OCI-LY7 (cell line): ENCODE measurements at regions of chr7 and their contacts with region 1.

Region 1: DNA sequence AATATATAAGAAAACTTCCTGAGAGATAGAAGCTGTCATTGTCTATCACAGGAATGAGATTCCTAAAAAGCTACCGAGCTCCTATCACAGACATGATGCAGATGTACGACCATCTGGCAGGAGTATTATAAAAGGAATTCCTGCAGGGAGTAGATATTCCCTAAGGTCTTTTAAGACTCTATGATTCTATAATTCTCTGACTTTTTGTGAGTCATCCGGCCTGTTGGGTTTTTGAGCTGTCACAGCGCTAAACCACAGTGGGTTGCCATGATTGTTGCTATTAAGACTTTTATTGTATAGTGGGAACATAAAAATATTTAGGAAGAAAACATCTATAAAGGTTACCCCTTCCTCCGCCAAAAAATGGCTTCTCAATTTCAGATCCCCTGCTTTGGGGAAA is 223.4 kb downstream of the BMPER start:
- DNase-seq: no peak
- H3K4me3 ChIP-seq: no peak overlapping the region
- H3K27ac ChIP-seq: no peak overlapping the region
- H3K4me1 ChIP-seq: no peaks in the 10 kb centered on the region
- CTCF ChIP-seq: no peak

Region 2: GRCh38 chr7:34107276-34107675 is 21.5 kb before region 1 on chr7:
- CTCF ChIA-PET with region 1: no interaction called
- POLR2A ChIA-PET with region 1: no interaction called
- intact Hi-C with region 1: no loop called
- DNase-seq: no peak
- H3K4me3 ChIP-seq: no peak overlapping the region
- H3K27ac ChIP-seq: no peak overlapping the region
- H3K4me1 ChIP-seq: no peaks in the 10 kb centered on the region
- CTCF ChIP-seq: no peak

Region 3: DNA sequence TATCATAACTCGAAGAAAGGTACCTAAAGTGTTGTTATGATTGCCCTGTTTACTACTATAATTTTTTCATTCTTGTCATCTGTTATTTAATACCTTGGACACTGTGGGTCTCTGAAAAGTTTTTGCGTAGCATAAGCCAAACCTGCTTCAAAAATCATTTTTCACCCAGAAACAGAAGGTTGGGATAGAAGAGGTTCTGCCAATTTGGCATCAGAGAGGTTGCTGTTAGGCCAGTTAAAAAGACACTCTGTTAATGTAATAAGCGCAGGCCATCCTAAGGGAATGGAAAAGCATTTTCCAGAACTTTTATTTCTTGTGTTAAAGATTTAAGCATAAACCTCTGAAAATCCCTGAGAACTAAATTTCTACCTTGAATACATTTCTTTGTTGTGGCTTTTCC is 11.2 kb before region 1 on chr7:
- CTCF ChIA-PET with region 1: interaction called, 12 read pairs
- POLR2A ChIA-PET with region 1: interaction called, 4 read pairs
- intact Hi-C with region 1: no loop called
- DNase-seq: no peak
- H3K4me3 ChIP-seq: no peak overlapping the region
- H3K27ac ChIP-seq: no peak overlapping the region
- H3K4me1 ChIP-seq: no peaks in the 10 kb centered on the region
- CTCF ChIP-seq: no peak